ENCODE measurements at regions of chr3 and their contacts with region 1.

Region 1: GRCh38 chr3:122415720-122416654 is at the start of gene WDR5B:
- DNase-seq: peak; percentile 99
- H3K4me3 ChIP-seq: peak within 1 kb of the TSS; percentile 71 to 94 (median 80)
- H3K27ac ChIP-seq: peak within 1 kb of the TSS; percentile 90
- H3K4me1 ChIP-seq: peaks cover 9% of the 10 kb centered on the region
- H3K27me3 ChIP-seq: no peaks in the 10 kb centered on the region
- CTCF ChIP-seq: peak in 1 of 2 donors; percentile 29
- POLR2A ChIP-seq: peak; percentile 97
- total RNA-seq, gene WDR5B: 2.6 and 3.7 TPM in 2 replicates

Region 2: GRCh38 chr3:122169908-122170307 is 246.1 kb before region 1 on chr3:
- CTCF ChIA-PET with region 1: no interaction called
- POLR2A ChIA-PET with region 1: no interaction called
- dilution Hi-C with region 1: no loop called
- intact Hi-C with region 1: no loop called
- DNase-seq: no peak
- H3K4me3 ChIP-seq: no peak overlapping the region
- H3K27ac ChIP-seq: no peak overlapping the region
- H3K4me1 ChIP-seq: no peaks in the 10 kb centered on the region
- H3K27me3 ChIP-seq: no peaks in the 10 kb centered on the region
- CTCF ChIP-seq: no peak
- POLR2A ChIP-seq: no peak

Region 3: DNA sequence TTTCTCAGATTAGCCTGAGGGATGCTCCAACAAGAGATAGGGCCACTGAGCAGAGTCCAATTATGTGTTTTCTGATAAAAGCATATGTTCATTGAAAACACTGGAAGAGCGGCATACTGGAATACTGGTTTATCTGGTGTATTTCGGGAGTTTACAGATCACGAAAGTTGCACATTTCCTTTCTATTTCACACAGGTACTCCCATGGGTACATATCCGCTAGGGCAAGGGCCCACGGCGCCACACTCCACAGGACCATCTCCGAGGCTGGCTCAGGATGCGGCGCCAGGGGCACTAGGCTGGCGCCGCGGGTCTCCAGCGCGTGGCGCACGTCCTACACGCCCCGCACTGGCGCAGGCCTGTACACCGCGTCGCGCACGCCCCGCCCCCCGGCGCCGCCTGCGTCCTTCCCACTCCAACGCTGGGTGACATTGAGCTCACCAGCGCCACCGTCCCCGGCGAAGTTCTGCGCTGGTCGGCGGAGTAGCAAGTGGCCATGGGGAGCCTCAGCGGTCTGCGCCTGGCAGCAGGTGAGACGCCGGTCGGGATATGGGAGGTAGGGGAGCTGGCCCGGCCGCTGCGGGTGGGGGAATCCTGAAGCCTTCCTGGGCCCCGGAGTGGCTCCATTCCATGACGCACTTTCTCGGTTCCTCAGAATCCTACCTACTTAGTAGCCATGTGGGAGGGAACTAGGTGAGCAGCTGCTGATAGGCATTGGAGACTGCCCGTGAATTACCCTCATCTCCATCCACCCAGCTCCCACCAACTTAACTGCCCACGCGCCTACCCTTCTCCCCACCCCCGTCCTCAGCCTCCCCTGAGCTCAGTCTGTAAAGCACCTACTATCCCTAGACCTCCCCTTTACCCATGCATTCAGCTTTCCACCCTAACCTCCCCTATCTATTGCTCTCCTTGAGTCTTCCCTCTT is 32.0 kb before region 1 on chr3 and contains the start of gene FAM162A:
- CTCF ChIA-PET with region 1: interaction called, 11 read pairs
- POLR2A ChIA-PET with region 1: interaction called, 6 read pairs
- dilution Hi-C with region 1: no loop called
- intact Hi-C with region 1: loop called (anchors 1 kb)
- DNase-seq: peak; percentile 96
- H3K4me3 ChIP-seq: peak within 1 kb of the TSS; percentile 69 to 97 (median 77)
- H3K27ac ChIP-seq: peak within 1 kb of the TSS; percentile 58
- H3K4me1 ChIP-seq: peaks cover 16% of the 10 kb centered on the region
- H3K27me3 ChIP-seq: no peaks in the 10 kb centered on the region
- CTCF ChIP-seq: peak; percentile 53 to 69
- POLR2A ChIP-seq: peak; percentile 86
- total RNA-seq, gene FAM162A: 23.4 and 25.9 TPM in 2 replicates

Region 4: DNA sequence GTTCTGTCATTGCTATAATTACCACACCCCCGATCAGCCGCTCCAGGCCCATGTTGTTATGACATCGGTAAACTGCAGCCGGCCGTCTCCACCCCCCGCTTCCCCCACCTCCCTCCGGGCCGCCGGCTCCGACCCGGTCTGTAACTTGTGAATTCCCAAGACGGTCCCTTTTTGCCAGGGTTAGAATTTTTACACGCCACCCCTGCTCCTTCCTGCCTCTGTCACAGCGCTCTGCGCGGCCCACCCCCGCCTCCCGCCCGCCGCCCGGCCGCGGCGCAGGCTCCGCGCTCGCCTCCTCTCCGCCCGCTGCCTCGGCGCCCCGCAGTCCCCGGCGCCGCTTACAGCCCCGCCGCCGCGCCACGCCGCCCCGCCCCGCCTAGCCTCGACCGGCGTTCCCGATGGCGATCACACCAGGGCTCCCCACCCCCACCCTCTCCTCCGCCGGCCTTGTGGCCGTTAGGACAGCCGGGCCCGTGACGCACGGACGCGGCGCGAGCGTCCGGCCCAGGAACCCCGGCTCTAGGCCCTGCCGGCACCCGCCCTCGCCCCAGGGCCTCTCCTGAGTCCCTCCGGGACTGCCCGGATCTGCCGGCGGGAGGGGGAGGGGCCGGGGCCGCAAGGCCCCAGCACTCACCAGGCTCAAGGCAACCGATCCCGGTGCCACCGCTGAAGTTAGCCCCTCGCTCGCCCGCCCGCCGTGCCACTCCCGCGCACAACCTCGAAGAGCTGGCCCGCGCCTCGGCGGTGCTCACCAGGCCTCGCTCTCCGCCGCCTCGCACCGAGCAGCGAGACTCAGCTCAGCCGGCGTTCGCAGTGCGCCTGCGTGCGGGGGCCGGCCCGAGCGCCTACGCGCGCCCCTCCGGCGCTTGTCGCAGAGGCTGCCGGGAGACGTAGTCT is 98.4 kb after region 1 on chr3 and contains the start of gene KPNA1:
- CTCF ChIA-PET with region 1: interaction called, 4 read pairs
- POLR2A ChIA-PET with region 1: no interaction called
- dilution Hi-C with region 1: no loop called
- intact Hi-C with region 1: loop called (anchors 5 kb)
- DNase-seq: peak; percentile 92
- H3K4me3 ChIP-seq: peak within 1 kb of the TSS; percentile 55 to 96 (median 91)
- H3K27ac ChIP-seq: peak within 1 kb of the TSS; percentile 72
- H3K4me1 ChIP-seq: peaks cover 14% of the 10 kb centered on the region
- H3K27me3 ChIP-seq: peaks cover 1 to 8% of the 10 kb centered on the region in 2 experiments
- CTCF ChIP-seq: no peak
- POLR2A ChIP-seq: peak; percentile 94
- total RNA-seq, gene KPNA1: 110 and 113 TPM in 2 replicates

Region 5: DNA sequence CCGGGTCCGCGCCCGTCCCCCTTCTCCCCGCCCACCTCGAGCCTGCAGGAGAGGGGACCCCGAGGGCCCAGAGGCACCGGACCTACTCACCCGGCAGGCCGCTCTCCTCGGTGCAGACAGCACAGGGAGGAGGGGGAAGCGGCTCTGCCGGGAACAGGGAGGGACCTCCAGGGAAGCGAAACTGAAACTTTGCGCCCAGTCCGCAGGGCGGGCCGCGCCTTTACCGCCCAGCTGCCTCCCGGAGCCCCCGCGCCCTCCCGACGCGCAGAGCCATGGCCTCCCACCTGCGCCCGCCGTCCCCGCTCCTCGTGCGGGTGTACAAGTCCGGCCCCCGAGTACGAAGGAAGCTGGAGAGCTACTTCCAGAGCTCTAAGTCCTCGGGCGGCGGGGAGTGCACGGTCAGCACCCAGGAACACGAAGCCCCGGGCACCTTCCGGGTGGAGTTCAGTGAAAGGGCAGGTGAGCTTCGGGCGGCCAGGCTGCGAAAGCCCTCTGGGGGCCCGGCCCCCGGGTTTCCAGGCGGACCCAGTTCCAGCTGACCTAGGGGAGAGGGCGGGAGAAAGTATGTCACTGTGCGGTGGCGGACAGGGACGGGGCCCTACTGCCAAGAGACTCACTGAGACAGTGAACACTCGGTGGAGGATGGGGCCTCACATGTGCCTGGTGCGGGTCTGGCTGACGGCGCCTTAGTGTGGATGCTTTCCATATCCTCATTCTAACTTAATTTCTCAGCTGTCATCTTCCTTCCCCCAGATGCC is 148.3 kb after region 1 on chr3 and contains the starts of genes DTX3L and PARP9:
- CTCF ChIA-PET with region 1: no interaction called
- POLR2A ChIA-PET with region 1: no interaction called
- dilution Hi-C with region 1: no loop called
- intact Hi-C with region 1: loop called (anchors 2 kb)
- DNase-seq: peak; percentile 77
- H3K4me3 ChIP-seq: peak within 1 kb of the TSS; percentile 60 to 96 (median 74)
- H3K27ac ChIP-seq: peak within 1 kb of the TSS; percentile 63
- H3K4me1 ChIP-seq: peaks cover 8% of the 10 kb centered on the region
- H3K27me3 ChIP-seq: no peaks in the 10 kb centered on the region
- CTCF ChIP-seq: no peak
- POLR2A ChIP-seq: peak; percentile 30
- total RNA-seq, gene DTX3L: 13.8 and 20.5 TPM in 2 replicates
- total RNA-seq, gene PARP9: 9.7 and 12.5 TPM in 2 replicates

Region 6: DNA sequence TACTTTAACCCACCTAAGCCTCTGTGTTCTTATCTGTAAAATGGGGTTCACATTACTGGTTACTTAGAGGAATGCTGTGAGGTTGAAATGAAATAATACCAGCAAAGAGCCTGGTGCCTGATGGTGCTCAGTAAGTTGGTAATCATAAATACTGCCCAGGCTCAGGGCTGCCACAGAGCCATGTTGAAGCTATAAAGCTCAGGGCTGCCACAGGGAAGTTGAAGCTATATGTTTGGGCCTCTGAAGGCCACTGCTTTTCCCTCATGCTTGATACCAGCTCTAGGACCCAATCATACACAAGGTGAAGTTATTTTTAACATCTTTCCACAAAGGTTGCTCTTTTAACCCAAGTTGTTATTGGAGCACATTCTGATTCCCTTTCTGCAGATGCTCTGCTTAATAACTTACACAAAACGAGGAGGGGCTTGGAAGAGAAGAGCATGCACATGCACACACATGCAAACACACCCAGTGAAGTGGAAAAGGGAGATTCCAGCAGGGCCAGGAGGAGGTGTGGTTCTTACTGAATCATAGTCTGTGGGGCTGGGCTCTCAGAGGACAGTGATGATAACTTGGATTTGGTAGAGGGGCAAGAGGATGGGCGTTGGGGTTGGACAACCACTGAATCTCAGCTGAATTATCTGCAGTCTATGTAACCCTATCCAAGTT is 282.1 kb after region 1 on chr3:
- CTCF ChIA-PET with region 1: no interaction called
- POLR2A ChIA-PET with region 1: no interaction called
- dilution Hi-C with region 1: no loop called
- intact Hi-C with region 1: no loop called
- DNase-seq: no peak
- H3K4me3 ChIP-seq: no peak overlapping the region
- H3K27ac ChIP-seq: no peak overlapping the region
- H3K4me1 ChIP-seq: no peaks in the 10 kb centered on the region
- H3K27me3 ChIP-seq: no peaks in the 10 kb centered on the region
- CTCF ChIP-seq: no peak
- POLR2A ChIP-seq: no peak